AG04450 (cell line): ENCODE measurements at regions of chr10 and their contacts with region 1.

Region 1: GRCh38 chr10:69914398-69915214 is 112.9 kb downstream of the COL13A1 start:
- DNase-seq: peak; percentile 39
- H3K4me3 ChIP-seq: no peak overlapping the region
- H3K27ac ChIP-seq: no peak overlapping the region
- H3K27me3 ChIP-seq: no peaks in the 10 kb centered on the region
- CTCF ChIP-seq: peak; percentile 87

Region 2: GRCh38 chr10:69696073-69696731 is 218.4 kb before region 1 on chr10:
- CTCF ChIA-PET with region 1: interaction called, 22 read pairs
- POLR2A ChIA-PET with region 1: no interaction called
- DNase-seq: peak; percentile 69
- H3K4me3 ChIP-seq: no peak overlapping the region
- H3K27ac ChIP-seq: no peak overlapping the region
- H3K27me3 ChIP-seq: peaks cover 19% of the 10 kb centered on the region
- CTCF ChIP-seq: peak; percentile 73

Region 3: GRCh38 chr10:69742928-69743602 is 171.5 kb before region 1 on chr10:
- CTCF ChIA-PET with region 1: interaction called, 18 read pairs
- POLR2A ChIA-PET with region 1: no interaction called
- DNase-seq: no peak
- H3K4me3 ChIP-seq: no peak overlapping the region
- H3K27ac ChIP-seq: no peak overlapping the region
- H3K27me3 ChIP-seq: no peaks in the 10 kb centered on the region
- CTCF ChIP-seq: peak; percentile 64

Region 4: DNA sequence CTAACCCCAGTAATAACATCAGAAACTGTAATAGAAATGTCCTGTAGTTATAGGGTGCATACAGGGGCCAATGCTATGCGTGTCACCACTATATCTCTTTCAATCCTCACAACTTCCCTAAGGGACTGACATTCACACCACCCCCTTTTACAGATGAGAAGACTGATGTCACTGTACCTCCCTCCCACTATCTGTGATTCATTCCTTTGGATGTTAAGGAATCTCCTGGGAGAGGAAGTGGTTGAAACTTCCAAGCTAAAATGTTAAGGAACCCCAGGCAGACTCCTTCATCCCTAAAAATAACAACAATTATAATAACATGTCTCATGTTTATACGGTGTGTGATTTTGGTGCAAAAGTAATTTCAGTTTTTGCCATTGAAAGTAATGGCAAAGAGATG is 107.5 kb before region 1 on chr10:
- CTCF ChIA-PET with region 1: interaction called, 18 read pairs
- POLR2A ChIA-PET with region 1: no interaction called
- DNase-seq: peak; percentile 41
- H3K4me3 ChIP-seq: no peak overlapping the region
- H3K27ac ChIP-seq: peak overlapping the region; percentile 63
- H3K27me3 ChIP-seq: no peaks in the 10 kb centered on the region
- CTCF ChIP-seq: no peak

Region 5: DNA sequence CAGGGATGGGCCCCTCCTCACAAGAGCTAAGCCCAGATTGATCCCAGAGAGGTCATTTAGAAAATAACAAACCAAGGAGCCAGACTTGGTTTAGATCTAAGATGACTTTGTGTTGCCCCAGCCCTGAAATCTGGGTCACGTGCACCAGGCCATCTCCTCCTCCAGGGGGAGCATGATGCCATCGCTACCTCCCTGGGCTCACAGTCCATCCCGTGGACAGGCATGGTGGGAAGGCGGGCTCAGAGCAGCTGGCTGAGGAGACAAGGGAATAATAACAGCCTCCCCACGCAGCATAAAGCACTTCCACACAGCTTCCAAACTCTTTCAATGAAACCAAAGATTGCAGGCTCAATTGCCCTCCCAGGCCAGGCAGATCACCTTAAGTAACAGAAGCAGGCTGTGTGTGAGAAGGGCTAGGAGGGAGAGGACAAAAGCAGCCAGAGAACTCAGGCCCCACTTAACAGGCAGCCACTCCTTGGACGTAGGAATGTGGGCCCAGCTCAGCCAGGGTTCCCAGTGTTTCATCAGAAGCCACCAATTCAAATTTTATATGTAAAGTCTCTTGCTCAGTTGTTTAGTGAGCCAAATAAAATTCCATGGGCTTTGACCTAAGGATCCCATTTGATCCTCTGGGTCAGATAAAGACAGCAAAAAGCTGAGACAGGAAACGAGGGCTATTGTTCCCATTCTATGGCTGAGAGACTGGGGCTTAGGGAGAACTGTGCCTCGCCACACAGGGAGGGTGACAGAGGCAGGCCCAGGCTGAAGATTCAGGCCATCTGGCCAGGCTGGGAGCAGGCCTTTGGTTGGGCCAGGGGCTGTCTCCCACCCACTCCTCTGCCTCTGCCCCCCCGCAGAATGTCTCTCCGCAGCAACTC is 12.7 kb before region 1 on chr10:
- CTCF ChIA-PET with region 1: interaction called, 32 read pairs
- POLR2A ChIA-PET with region 1: no interaction called
- DNase-seq: peak; percentile 11
- H3K4me3 ChIP-seq: no peak overlapping the region
- H3K27ac ChIP-seq: no peak overlapping the region
- H3K27me3 ChIP-seq: no peaks in the 10 kb centered on the region
- CTCF ChIP-seq: peak; percentile 74

Region 6: GRCh38 chr10:69988094-69988493 is 73.5 kb after region 1 on chr10:
- CTCF ChIA-PET with region 1: no interaction called
- POLR2A ChIA-PET with region 1: no interaction called
- DNase-seq: no peak
- H3K4me3 ChIP-seq: no peak overlapping the region
- H3K27ac ChIP-seq: no peak overlapping the region
- H3K27me3 ChIP-seq: peaks cover 2% of the 10 kb centered on the region
- CTCF ChIP-seq: no peak